Posterior cingulate gyrus (tissue), 11 donors: ENCODE measurements at regions of chr10 and their contacts with region 1.

Region 1: DNA sequence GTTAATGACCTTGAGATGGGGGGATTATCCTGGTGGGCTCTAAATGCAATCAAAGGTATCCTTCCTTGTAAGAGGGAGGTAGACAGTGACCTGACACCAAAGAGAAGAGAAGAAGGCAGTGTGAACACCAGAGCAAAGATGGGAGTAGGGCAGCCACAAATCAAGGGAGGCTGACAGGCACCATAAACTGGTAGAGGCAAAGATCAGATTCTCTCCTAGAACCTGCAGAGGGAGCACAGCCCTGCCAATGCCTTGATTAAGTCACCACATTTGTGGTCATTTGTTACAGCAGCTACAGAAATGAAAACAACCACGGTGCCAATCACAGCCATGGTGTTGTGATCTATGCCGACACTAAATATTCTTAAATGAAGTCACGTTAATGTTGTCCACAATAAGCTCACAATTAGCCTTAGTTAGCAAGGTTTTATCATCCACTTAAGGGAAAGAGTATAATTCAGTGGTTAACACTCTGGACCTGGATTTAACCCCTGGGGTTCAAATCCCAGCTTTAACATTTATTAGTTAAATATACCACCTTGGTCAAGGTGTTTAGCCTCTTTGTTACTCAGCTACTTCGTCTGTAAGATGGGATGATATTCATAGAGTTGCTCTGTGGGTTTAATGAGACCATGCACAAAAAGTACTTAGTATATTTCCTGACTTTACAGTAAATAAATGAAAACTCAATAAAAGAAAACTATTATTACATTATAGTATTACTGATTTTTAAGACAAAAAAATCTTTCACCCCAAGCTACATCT is 70.8 kb downstream of the SGMS1 start:
- DNase-seq: peak in 1 of 10 donors; percentile 69

Region 2: DNA sequence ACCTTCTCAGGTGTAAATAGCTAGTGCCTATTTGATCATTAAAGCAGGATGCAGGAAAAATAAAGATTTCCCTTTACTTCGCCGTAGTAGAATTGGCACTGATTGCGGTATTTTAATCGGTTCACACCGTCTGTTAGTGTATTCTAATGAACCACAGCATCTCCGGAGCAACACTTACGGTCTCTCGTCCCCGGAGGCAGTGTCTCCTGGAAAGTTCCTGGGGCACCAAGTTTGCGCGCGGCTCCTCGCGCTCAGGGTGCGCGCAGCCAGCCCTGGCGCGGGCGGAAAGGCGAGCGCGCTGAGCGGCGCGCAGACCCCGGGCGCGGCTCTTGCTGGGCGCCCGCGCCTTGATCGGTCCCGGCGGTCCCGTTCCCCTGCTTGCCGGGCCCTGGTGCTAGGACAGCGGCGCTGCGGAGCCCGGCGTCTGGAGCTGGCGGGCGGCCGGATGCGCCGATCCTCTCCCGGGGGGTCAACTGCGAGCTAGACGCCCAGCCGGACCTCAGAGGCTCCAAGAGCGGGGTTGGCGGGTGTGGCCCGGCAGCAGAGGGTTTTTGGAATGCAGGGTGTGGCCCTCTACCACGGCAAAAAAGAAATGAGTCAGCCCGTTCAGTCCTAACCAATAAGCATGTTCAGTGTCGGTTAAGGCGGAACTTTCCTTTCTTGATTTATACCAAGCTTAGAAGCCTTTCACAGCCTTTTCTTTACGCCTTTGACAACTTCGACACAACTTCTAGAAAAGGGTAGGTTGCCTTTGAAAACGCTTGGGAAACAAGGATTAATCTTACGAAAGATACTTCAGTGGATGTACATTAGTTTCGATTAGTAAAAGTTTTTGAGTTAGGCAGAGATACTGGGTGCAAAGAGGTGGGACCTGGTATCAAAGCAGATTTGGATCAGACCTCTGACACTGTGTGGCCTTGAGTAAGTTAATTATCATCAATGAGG is 134.8 kb before region 1 on chr10:
- intact Hi-C with region 1: loop called (anchors 5 kb)
- DNase-seq: peak; percentile 19 to 92 (median 40)

Region 3: DNA sequence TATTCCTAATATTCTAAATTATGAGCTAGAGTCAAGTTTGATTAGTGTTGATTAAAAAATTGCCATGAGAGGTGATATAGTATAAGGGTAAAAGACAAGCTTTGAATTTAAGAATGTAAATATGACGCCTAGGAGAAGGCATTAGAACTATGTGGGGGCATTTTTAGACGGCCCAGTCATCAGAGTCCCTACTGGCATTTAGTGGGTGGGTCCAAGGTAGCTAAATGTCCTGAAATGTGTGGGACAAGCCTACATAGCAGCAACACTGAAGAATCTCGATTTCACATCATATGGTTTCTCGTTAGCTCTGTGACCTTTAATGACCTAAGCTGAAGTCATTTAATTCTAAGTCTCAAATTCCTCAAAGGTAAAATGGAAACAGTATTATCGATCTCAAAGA is 62.7 kb before region 1 on chr10:
- intact Hi-C with region 1: no loop called
- DNase-seq: no peak

Region 4: GRCh38 chr10:50501918-50502452 is 51.0 kb before region 1 on chr10:
- intact Hi-C with region 1: loop called (anchors 5 kb)
- DNase-seq: no peak